ENCODE measurements at regions of chr6 and their contacts with region 1.

Region 1: DNA sequence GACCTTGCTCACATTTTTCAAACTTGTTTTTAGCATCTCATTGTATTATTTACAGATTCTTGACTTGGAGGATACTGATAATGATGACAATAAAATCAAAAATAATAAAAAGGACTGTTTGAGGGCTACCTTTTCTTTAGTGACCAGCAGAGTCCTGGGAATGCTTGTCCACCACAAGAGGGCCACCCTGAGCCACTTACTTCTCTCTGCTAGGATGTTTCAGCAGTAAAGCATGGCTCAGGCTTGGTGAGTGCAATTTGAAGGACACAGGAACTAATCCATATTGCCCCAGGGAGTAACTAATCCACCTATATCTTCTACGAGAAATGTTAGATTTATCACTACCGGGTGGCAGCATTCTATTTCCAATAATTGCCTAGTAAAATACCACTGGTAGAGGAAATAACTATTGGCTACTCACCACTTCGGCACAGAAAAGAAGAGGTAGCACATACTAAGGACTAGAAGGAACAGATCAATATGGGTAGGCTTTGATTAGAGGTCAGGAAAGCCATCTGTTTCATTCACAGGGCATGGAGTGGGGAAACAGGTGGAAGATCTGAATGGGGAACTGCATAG is 5.8 kb upstream of the KIAA0408 start:
- DNase-seq: peak; percentile 62 to 77
- ATAC-seq: peak; percentile 80 to 88 (median 88)
- H3K4me3 ChIP-seq: no peak overlapping the region
- H3K27ac ChIP-seq: peak overlapping the region; percentile 97
- H3K4me1 ChIP-seq: peaks cover 33% of the 10 kb centered on the region
- H3K27me3 ChIP-seq: no peaks in the 10 kb centered on the region
- CTCF ChIP-seq: peak; percentile 86

Region 2: DNA sequence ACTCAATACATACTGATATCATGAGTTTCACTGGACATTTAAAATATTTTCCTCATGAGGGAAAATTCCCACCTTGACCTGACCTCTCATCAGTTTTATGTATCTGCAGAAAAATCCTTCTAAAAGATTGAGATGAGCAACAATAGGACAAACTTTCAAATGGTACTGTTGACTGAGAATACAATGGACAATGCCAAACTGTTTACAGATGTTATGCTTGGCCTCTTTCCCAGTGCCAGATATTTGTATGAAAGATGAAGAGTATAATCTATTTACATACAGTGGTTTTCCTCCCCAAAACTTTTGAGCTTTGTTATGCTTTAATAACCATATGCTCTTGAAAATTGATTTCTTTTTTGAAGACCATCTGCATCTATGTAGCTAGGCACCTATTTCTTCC is 591.6 kb before region 1 on chr6:
- intact Hi-C with region 1: no loop called
- DNase-seq: no peak
- ATAC-seq: no peak
- H3K4me3 ChIP-seq: no peak overlapping the region
- H3K27ac ChIP-seq: no peak overlapping the region
- H3K4me1 ChIP-seq: no peaks in the 10 kb centered on the region
- H3K27me3 ChIP-seq: no peaks in the 10 kb centered on the region
- CTCF ChIP-seq: no peak

Region 3: DNA sequence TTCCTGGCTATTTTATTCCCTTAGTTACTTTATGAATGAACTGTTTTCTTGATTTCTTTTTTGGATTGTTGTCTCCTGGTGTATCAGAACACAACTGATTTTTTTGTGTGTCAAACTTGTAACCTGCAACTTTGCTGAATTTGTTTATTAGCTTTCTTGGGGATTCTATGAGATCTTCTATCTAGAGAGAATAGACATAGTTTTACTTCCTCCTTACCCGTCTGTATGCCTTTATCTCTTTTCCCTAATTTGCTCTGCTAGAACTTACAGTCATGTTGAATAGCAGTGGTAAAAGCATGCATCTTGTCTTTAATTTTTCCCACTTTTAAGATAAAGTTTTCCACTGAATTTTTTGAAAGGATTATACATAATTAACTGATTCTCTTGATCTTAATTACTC is 185.2 kb before region 1 on chr6:
- intact Hi-C with region 1: no loop called
- DNase-seq: no peak
- ATAC-seq: no peak
- H3K4me3 ChIP-seq: no peak overlapping the region
- H3K27ac ChIP-seq: no peak overlapping the region
- H3K4me1 ChIP-seq: peaks cover 55% of the 10 kb centered on the region
- H3K27me3 ChIP-seq: no peaks in the 10 kb centered on the region
- CTCF ChIP-seq: no peak

Region 4: DNA sequence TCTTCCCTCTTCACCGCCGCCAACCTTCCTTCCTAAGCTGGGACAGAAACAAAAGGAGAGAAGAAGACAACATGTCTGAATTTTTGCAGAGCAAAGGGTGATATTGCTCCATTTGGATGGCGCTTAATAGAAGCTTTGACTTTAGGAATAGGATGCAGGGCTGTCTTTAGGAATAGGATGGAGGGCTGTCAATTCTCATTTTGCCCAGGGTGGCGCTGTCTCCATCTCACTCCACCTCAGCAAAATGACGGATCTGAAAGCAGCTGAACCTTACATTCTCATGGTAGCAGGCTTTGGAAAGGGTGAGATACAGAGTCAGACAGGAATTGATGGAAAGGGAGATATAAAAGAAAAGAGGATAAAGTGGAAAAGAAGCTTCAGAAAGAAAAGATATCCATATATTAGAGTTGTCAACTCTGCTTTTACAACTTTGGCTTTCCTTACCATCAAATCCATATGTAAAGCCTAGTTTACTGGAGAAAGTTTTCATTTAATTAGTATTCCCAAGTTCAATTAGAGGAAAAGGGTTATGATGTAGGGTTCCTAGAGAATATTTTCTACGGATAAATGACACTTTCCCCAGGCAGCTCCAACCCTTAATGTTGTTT is 51.8 kb after region 1 on chr6:
- intact Hi-C with region 1: loop called in 1 of 2 experiments (anchors 10 kb)
- DNase-seq: no peak
- ATAC-seq: peak; percentile 44 to 79 (median 62)
- H3K4me3 ChIP-seq: peak overlapping the region; percentile 78
- H3K27ac ChIP-seq: no peak overlapping the region
- H3K4me1 ChIP-seq: peaks cover 10% of the 10 kb centered on the region
- H3K27me3 ChIP-seq: peaks cover 3 to 43% (median 6%) of the 10 kb centered on the region in 3 donors
- CTCF ChIP-seq: peak; percentile 50

Region 5: DNA sequence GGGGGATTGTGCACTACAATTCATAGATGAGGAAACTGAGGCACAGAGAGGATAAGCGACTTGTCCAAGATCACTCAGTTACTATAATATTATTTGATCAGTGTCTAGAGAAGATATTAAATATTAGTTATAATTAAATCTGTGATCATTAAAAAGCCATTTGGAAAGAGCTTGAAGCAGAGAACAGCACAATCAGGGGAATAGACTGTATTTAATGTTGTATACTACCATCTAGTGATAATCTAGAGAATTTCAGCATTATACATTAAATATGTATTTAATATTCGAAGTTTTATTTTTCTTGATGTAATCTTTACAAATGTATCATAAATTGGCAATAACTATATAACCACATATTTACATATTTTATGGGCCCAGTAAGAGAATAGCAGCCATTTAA is 74.3 kb after region 1 on chr6:
- intact Hi-C with region 1: loop called (anchors 2 to 5 kb)
- DNase-seq: no peak
- ATAC-seq: peak in 3 of 4 donors; percentile 49 to 82 (median 53)
- H3K4me3 ChIP-seq: no peak overlapping the region
- H3K27ac ChIP-seq: no peak overlapping the region
- H3K4me1 ChIP-seq: no peaks in the 10 kb centered on the region
- H3K27me3 ChIP-seq: peaks cover 0 to 4% (median 0%) of the 10 kb centered on the region in 3 donors
- CTCF ChIP-seq: peak; percentile 56

Region 6: GRCh38 chr6:127641905-127642304 is 176.9 kb after region 1 on chr6:
- intact Hi-C with region 1: loop called in 1 of 2 experiments (anchors 5 kb)
- DNase-seq: no peak
- ATAC-seq: peak in 3 of 4 donors; percentile 46 to 64 (median 47)
- H3K4me3 ChIP-seq: no peak overlapping the region
- H3K27ac ChIP-seq: no peak overlapping the region
- H3K4me1 ChIP-seq: no peaks in the 10 kb centered on the region
- H3K27me3 ChIP-seq: no peaks in the 10 kb centered on the region
- CTCF ChIP-seq: peak; percentile 46